ENCODE measurements at regions of chr2 and their contacts with region 1.

Region 1: GRCh38 chr2:166167449-166167848 is 39.6 kb upstream of the SCN1A start:
- DNase-seq: no peak
- ATAC-seq: no peak

Region 2: DNA sequence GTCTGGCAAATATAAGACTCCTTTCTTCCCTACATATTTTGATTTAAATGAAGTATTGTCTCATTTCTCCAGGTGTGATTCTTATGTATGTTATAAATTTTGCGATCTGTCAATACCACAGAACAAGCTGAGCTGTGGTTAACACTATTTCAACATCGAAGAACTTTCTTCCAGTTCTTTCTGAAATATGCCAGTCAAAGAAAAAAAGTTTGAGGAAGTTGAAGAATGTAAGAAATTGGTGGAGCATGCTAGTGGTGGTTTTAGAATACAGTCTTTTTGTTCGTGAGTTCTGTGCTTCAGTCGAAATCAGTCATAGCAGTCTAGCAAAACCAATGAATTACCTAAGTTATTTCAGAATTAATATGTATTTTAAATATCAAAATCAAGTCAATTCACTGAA is 1317.2 kb before region 1 on chr2:
- intact Hi-C with region 1: loop called (anchors 10 kb)
- DNase-seq: no peak
- ATAC-seq: peak; percentile 48

Measured in sciatic nerve (tissue), 2 donors.